Activated CD4-positive, alpha-beta T cell treated with anti-CD3 and anti-CD28 coated beads, Interleukin-2, amount 10 ng/mL, durations not matched to agents 24 days and 14 days (primary cell): ENCODE measurements at regions of chr20 and their contacts with region 1.

Region 1: DNA sequence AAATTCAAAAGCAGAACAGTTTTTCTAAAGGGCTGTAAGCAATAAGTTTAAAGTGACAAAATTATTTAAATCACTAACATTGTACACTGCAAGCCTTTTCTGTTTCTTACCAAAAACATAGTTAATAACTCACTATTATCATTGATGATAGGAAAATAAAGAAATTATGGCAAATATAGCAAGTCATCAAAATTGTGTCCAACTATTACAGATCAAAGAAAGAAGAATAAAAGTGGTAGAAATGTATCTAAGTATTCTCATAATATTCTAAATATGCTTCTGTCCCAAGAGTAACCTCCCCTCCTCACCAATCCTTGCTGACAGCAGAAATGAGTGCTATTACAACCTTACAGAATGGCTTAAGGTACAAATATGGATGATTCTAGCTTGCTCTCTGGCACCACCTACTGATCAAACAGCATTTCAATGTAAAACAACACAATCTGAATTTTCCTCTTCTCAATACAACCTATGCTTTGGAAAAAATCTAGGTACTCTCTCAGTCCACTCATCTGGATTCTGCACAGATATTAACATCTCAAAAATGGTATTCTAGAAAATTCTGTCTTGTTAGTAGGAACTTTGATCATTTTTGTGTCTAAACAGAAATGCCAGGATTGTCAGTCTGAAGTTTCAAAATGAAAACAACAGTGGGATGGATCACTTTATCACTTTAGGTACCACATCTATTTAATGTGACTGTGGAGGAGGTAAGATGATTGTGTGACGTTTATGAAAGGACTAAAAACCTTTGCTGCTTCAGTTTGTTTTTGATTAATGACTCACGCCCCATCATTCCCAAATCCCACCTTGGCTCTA is 40.9 kb downstream of the ZFP64 start:
- DNase-seq: peak; percentile 76
- H3K4me3 Mint-ChIP-seq: no peak overlapping the region
- H3K27ac Mint-ChIP-seq: no peak overlapping the region
- H3K4me1 Mint-ChIP-seq: no peaks in the 10 kb centered on the region
- H3K27me3 Mint-ChIP-seq: no peaks in the 10 kb centered on the region

Region 2: DNA sequence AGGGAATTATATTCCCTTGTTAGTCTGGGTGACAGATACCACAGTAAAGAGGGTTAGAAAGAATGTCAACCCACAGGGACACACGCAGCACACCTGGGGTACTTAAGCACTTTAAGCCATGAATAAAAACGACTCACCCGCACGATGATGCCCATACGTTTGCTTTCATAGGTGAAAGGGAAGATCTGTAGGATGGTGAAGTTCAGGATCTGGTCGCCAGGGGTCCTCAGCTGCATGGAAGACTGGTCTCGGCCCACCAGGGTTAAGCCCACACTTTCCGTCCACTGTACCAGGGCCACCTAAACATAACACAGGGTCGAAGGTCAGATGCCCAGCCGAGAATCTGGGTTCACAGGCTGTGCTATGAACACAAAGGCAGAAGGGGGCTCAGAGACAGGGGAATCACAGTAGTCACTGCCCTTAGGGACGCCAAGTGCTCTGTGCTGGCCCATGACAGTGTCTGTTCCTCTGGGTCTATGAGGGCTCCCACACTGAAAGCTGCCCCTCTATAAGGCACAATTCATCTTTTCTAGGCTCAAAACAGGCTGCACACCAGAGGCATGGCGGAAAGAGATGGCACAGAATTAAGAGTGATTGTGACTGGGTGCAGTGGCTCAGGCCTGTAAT is 511.3 kb before region 1 on chr20:
- intact Hi-C with region 1: loop called (anchors 1 kb)
- DNase-seq: peak; percentile 82
- H3K4me3 Mint-ChIP-seq: no peak overlapping the region
- H3K27ac Mint-ChIP-seq: no peak overlapping the region
- H3K4me1 Mint-ChIP-seq: peaks cover 3% of the 10 kb centered on the region
- H3K27me3 Mint-ChIP-seq: peaks cover 2% of the 10 kb centered on the region

Region 3: GRCh38 chr20:52127309-52127708 is 23.3 kb before region 1 on chr20:
- intact Hi-C with region 1: loop called (anchors 1 kb)
- DNase-seq: no peak
- H3K4me3 Mint-ChIP-seq: no peak overlapping the region
- H3K27ac Mint-ChIP-seq: no peak overlapping the region
- H3K4me1 Mint-ChIP-seq: peaks cover 2% of the 10 kb centered on the region
- H3K27me3 Mint-ChIP-seq: peaks cover 2% of the 10 kb centered on the region